Posterior vena cava (tissue), 2 donors: ENCODE measurements at regions of chr14 and their contacts with region 1.

Region 1: DNA sequence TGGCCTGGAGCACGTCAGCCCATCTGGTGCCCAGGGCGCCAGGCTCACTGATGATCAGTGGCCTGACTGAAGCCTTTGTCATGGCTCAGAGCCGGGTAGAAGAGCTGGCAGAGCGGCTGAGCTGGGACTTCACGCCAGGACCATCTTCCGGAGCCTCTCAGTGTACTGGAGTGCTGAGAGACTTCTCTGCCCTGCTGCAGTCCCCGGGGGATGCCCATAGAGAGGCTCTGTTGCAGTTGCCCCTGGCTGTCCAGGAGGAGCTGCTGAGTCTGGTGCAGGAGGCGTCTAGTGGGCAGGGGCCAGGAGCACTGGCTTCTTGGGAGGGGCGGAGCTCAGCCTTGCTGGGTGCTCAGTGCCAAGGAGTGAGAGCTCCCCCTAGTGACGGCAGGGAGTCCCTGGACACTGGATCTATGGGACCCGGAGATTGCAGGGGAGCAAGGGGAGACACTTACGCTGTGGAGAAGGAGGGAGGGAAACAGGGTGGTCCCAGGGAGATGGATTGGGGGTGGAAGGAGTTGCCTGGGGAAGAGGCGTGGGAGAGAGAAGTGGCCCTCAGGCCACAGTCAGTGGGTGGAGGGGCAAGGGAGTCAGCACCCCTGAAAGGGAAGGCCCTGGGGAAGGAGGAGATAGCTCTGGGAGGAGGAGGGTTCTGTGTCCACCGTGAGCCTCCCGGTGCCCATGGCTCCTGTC is 2.0 kb downstream of the KHNYN start:
- DNase-seq: peak; percentile 96

Region 2: GRCh38 chr14:24095271-24096068 is 336.2 kb before region 1 on chr14:
- intact Hi-C with region 1: no loop called
- DNase-seq: peak; percentile 90

Region 3: DNA sequence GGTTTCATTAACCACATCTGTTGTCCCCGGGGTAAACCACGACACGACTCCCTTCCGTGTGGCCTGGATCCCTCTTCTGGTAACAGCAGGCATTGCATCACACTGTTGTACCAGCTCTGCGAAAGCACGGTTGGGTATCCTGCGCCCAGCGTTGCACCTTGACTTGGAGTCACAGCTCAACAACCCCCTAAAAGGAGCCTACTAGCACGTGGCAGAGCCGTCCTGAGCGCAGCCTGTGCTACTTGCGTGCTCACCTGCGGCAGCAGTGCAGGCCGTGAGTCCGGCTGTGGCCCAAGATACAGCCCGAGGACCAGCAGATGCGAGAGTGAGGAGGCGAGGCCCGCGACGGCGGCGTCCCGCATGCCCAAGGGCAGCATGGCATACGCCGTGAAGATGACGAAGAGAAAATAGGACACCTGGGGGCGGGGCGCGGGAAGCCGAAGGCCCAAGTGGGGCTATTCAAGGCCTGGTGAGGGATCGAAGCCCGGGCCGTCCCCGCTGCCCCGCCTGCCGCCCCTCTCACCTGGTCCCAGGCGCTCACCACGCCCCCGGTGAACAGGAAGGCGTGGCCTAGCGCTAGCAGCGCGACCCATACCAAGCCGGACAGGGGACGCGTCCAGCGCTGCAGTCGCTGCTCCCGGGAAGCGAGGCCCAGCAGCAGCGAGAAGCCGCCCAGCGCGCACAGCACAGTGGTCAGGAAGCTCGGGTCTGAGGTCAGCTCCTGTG is 99.3 kb before region 1 on chr14:
- intact Hi-C with region 1: loop called (anchors 1 to 5 kb)
- DNase-seq: peak; percentile 87

Region 4: DNA sequence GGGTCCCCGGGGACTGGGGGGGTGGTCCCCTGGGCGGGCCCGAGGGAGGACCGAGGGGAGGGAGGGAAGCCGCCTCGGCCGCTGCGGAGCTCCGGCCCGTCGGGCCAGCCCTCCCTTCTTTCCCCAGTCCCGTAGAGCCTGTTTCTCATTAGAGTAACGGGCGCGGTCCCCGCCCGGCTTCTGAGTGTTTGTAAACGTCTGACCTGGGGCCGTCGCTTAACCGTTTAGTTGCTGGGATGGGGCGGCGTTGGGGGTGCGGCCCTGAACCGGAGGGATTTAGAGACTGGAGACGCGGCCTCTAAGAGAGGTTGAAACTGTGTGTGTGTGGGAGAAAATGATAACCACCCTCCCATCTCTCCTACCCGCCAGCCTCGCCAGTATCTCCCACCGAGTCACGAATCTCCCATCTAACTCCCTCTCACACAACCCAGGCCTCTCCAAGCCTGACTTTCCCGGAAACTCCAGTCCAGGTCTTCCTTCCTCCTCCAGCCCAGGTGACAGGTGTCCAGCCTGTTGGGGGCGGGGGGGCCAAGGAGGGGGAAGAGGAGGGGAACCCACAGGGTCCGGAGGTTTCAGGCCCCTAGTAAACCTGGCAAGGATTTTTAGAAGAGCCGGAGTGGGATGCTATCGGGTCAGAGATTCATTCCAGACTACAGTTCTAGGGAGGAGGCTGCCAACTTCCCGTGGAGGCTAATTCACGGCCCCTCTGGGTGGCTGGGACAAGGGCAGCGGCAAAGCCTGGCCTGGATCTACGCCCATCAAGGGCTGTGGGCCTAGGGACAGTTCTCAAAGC is 64.8 kb before region 1 on chr14:
- intact Hi-C with region 1: loop called (anchors 1 to 5 kb)
- DNase-seq: peak; percentile 97

Region 5: DNA sequence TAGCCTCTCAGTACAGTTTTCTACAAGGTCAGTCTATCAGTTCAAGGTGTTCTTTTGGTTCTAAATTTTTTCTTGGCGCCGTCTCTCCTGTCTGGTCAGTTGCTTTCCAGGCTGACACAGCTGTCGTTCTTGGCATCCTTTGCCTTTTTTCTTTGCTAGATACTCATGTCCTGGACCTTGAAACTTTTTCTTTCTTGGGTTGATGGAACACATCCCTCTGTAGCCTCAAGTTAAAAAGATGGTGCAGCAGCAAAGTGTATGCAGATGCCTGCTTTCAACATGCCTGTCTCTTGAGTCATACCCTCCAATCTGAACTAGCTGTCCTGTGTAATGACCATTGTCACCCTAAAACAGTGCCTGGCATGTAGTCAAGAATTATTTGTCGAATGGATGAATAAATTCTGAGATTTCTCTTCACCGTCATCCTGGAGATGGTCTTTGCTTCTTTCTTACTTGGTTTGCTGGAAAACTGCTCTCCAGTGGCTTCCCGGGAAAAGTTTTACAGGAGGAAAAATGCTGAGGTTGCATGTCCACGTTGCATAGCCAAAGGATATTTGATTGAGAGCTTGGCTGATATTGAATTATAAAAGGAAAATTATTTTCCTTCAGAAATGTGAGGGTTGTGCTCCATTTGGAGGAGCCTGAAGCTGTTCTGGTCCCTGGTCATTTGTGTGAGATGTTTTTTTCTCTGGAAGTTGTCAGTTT is 28.3 kb before region 1 on chr14:
- intact Hi-C with region 1: no loop called
- DNase-seq: no peak